ENCODE measurements at regions of chr22 and their contacts with region 1.

Region 1: DNA sequence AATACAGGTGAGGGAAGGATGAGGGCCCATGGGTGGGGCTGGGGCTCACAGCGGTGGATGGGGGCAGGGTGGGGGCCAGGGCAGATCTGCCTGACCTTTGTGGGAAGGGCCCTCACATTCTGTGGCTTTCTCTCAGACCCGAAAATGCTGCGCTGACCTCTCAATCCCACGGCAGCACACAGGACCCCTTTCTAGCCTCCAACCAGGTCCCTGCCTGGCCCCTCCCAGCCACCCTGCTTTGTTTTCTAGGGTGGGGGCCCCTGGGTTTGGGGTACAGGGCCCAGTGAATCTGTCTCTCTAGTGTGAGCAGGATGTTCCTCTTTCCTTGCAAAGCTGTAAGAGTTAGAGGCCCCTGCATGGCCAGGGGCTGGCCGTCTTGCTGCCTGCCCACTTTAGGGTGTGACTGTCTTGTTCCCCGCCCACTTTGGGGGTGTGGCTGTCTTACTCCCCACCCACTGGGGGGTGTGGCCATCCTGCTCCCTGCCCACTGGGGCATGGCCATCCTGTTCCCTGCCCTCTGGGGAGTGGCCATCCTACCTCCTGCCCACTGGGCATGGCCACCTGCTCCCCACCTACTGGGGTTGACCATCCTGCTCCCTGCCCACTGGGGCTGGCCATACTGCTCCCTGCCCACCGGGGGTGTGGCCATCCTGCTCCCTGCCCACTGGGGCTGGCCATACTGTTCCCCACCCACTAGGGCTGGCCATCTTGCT is 11.5 kb downstream of the PARVG start:
- DNase-seq: peak in 7 of 10 donors; percentile 34 to 59 (median 44)
- ATAC-seq: peak; percentile 53 to 75
- H3K4me3 Mint-ChIP-seq: peak overlapping the region in 2 of 10 donors; percentile 71 to 80
- H3K27ac Mint-ChIP-seq: peak overlapping the region in 2 of 10 donors; percentile 33 to 76
- H3K4me1 Mint-ChIP-seq: peaks cover 27 to 48% (median 41%) of the 10 kb centered on the region in 4 donors
- H3K27me3 Mint-ChIP-seq: no peaks in the 10 kb centered on the region

Region 2: DNA sequence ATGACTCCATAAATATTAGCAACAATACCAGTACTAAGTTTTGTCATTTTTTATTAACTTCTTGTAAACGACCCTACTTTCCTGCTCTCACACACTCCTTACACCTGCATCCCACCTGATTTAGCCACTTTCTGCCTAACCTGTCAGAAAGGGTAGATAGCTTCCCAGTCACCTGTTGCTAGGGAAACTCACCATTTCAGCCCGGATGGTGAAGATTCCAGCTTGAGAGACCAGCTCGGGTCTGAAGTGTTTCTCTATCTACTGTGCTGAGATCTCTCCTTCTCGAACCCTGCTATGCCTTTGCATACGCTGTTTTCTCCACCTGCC is 11.6 kb before region 1 on chr22 and contains the start of gene PARVG:
- POLR2A ChIA-PET with region 1: interaction called, 27 read pairs
- DNase-seq: peak in 9 of 10 donors; percentile 43 to 82 (median 71)
- ATAC-seq: peak; percentile 48 to 68
- H3K4me3 Mint-ChIP-seq: peak within 1 kb of the TSS; percentile 84 to 96 (median 92)
- H3K27ac Mint-ChIP-seq: peak within 1 kb of the TSS; percentile 93 to 99 (median 97)
- H3K4me1 Mint-ChIP-seq: peaks cover 26 to 38% (median 36%) of the 10 kb centered on the region in 4 donors
- H3K27me3 Mint-ChIP-seq: no peaks in the 10 kb centered on the region
- polyA plus RNA-seq, gene PARVG: 60.6 to 77.8 (median 67.0) TPM

Region 3: GRCh38 chr22:44242946-44243724 is 50.9 kb after region 1 on chr22:
- POLR2A ChIA-PET with region 1: no interaction called
- DNase-seq: no peak
- ATAC-seq: no peak
- H3K4me3 Mint-ChIP-seq: no peak overlapping the region
- H3K27ac Mint-ChIP-seq: no peak overlapping the region
- H3K4me1 Mint-ChIP-seq: no peaks in the 10 kb centered on the region
- H3K27me3 Mint-ChIP-seq: peaks cover 10 to 34% (median 25%) of the 10 kb centered on the region in 5 donors

Measured in naive thymus-derived CD8-positive, alpha-beta T cell (primary cell).